ENCODE measurements at regions of chr2 and their contacts with region 1.

Region 1: DNA sequence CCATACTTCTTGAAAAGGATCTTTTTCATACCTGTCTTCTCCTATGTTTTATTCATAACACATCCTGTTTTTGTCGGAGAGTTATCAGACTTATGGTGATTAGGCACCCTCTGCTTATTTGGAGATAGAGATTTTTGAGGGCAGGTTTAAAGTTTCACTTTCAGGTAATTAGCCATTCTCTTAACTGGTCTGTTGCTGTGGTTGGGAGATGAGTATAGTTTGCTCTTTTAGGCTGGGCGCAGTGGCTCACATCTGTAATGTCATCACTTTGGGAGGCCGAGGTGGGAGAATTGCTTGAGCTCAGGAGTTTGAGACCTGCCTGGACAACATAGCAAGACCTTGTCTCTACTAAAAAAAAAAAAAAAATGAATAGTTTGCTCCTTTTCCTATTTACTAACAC is 25.3 kb downstream of the SFTPB start:
- DNase-seq: no peak
- ATAC-seq: no peak
- H3K4me3 ChIP-seq: no peak overlapping the region
- H3K27ac ChIP-seq: no peak overlapping the region
- H3K4me1 ChIP-seq: 0 out of 2 replicates have a peak, but pooled peaks cover under 1% of the 10 kb centered on the region
- H3K27me3 ChIP-seq: no peaks in the 10 kb centered on the region
- CTCF ChIP-seq: no peak

Region 2: DNA sequence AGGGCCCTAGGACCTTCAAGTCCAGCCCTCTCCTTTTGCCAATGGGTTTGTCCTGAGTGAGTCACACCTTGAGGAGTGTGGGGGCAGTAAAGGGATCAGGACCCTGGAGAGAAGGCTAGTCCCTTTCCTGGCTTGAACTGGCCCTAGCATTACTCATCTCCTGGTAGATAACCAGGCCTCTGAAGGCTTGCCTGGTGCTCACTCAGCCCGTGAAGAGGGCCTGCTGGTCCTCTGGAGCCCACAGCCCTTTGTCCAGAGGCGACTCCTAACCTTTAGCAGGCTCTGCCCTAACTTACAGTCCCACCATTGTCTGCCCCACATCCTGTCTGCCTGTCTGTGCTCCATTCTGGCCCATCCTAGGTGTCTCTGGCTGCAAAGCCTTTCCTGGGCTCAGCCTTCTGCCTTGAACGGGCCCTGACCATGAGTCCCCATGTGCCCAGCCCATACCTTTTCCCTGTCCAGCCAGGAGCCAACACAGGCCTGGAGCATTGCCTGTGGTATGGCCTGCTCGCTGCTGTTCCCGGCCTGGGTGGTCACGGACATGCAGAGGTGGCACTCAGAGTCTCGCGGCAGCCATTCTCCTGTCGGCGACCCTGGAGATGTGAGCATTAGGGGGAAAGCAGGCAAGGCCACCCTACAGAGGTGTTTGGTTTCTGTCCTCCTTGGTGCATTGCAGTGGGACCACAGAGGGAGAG is 20.3 kb after region 1 on chr2:
- CTCF ChIA-PET with region 1: no interaction called
- POLR2A ChIA-PET with region 1: no interaction called
- intact Hi-C with region 1: no loop called
- DNase-seq: peak; percentile 73
- ATAC-seq: peak; percentile 90
- H3K4me3 ChIP-seq: no peak overlapping the region
- H3K27ac ChIP-seq: no peak overlapping the region
- H3K4me1 ChIP-seq: 0 out of 2 replicates have a peak, but pooled peaks cover 4% of the 10 kb centered on the region
- H3K27me3 ChIP-seq: no peaks in the 10 kb centered on the region
- CTCF ChIP-seq: no peak

Region 3: DNA sequence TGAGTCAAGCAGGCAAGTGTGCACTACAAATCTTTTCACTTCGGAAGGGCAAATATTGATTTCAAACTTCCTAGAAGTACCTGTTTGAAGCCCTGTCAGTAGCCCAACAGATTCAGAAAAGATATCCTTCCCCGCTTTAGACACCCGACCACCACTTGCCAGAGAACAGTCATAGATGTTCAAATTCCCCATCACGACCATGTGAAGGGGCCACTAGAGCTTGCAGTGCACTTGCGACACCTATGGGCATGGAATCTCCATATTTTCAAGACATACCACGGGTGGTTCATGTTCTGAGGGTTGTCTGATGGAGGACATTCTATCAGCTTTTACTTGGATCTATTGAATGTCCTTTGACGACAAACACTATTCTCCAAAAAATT is 75.3 kb after region 1 on chr2:
- CTCF ChIA-PET with region 1: interaction called, 3 read pairs
- POLR2A ChIA-PET with region 1: no interaction called
- intact Hi-C with region 1: loop called (anchors 1 kb)
- DNase-seq: peak; percentile 43
- ATAC-seq: peak; percentile 59
- H3K4me3 ChIP-seq: no peak overlapping the region
- H3K27ac ChIP-seq: no peak overlapping the region
- H3K4me1 ChIP-seq: peaks cover 7% of the 10 kb centered on the region; the same call in 1 of the 2 replicates
- H3K27me3 ChIP-seq: no peaks in the 10 kb centered on the region
- CTCF ChIP-seq: peak; percentile 60